ENCODE measurements at regions of chrX and their contacts with region 1.

Region 1: DNA sequence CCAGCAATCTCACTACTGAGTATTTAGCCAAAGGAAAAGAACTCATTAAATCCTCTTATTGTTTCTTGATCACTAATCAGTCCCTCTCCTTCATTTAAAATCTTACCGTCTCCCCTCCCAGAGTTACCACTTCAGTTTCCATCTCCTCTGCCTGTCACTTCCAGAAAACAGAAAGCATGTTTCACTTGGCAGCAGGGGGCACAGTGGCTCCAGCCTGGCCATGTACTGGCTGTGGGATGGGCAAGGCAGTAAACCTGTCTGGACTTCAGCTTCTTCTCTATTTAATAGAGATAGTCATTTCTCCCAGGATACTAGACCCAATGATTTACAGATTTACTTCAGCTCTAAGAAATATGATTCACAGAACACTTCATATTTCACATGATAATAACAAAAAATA is 63.2 kb downstream of the CD40LG start:
- DNase-seq: peak; percentile 51
- H3K4me3 ChIP-seq: no peak overlapping the region
- H3K27ac ChIP-seq: no peak overlapping the region
- H3K4me1 ChIP-seq: no peaks in the 10 kb centered on the region
- H3K27me3 ChIP-seq: no peaks in the 10 kb centered on the region

Region 2: DNA sequence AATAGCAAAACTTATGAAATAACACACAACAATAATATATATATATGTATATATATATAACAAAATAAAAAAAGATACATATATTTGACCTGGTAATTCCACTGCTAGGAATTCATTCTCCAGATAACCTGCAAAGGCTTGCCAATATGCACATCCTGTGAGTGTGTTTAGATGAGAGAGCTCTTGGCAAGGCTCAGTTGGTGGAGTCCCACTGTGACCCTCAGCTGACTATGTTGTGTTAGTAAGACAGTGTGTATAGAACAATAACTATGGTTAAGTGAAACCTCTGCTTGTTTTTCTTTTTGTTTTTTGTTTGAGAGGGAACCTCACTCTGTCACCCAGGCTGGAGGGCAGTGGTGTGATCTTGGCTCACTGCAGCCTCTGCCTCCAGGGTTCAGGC is 208.9 kb after region 1 on chrX:
- in situ Hi-C with region 1: loop called (anchors 5 kb)
- DNase-seq: no peak
- H3K4me3 ChIP-seq: no peak overlapping the region
- H3K27ac ChIP-seq: no peak overlapping the region
- H3K4me1 ChIP-seq: no peaks in the 10 kb centered on the region
- H3K27me3 ChIP-seq: no peaks in the 10 kb centered on the region

Measured in GM23248 (cell line).